HepG2 (cell line): ENCODE measurements at regions of chr5 and their contacts with region 1.

Region 1: GRCh38 chr5:8013948-8014710 is 145.2 kb downstream of the MTRR start:
- DNase-seq: no peak
- ATAC-seq: no peak
- H3K4me3 ChIP-seq: no peak overlapping the region
- H3K27ac ChIP-seq: no peak overlapping the region
- H3K4me1 ChIP-seq: no peaks in the 10 kb centered on the region
- H3K27me3 ChIP-seq: no peaks in the 10 kb centered on the region
- CTCF ChIP-seq: no peak
- EP300 ChIP-seq: no peak
- POLR2A ChIP-seq: no peak
- RAD21 ChIP-seq: no peak

Region 2: DNA sequence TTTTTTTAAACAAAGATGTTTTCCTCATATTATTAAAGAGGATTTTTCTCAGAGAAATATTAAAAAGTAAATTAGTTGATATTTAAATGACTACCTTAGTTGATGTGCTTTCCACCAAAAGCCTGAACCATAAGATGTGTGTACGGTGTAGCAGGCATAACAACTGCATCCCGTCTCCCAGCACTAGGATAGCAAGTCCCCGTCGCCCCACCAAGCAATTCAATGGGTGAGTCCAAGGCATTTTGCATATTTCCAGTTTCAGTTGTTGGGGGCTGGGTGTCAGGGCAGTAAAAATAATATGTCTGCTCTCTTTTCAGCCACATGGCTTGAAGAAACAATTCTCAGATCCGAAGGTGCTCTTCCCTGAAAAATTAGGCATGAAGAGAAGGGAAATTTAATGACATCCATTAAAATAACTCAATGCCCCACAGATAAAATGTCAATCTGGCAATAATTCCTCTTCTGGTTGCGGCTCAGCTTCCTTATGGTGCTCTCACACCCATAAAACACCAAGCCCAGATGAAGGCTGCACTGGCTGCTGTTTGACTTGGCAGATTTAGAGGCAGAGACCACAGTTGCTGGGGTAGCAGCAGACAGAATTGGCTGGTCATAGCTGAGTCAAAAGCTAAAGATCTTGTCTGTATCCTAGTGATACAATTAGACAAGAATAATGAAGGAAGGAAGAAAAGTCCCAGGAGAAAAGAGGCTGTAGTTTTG is 742.6 kb before region 1 on chr5:
- CTCF ChIA-PET with region 1: no interaction called
- POLR2A ChIA-PET with region 1: no interaction called
- in situ Hi-C with region 1: no loop called
- intact Hi-C with region 1: no loop called
- DNase-seq: no peak
- ATAC-seq: no peak
- H3K4me3 ChIP-seq: no peak overlapping the region
- H3K27ac ChIP-seq: no peak overlapping the region
- H3K4me1 ChIP-seq: no peaks in the 10 kb centered on the region
- H3K27me3 ChIP-seq: no peaks in the 10 kb centered on the region; a peak in 1 of 5 replicates
- CTCF ChIP-seq: no peak
- EP300 ChIP-seq: no peak
- POLR2A ChIP-seq: no peak
- RAD21 ChIP-seq: no peak

Region 3: GRCh38 chr5:8184455-8185063 is 170.4 kb after region 1 on chr5:
- CTCF ChIA-PET with region 1: no interaction called
- POLR2A ChIA-PET with region 1: no interaction called
- in situ Hi-C with region 1: no loop called
- intact Hi-C with region 1: loop called (anchors 1 kb)
- DNase-seq: peak; percentile 20
- ATAC-seq: peak; percentile 94
- H3K4me3 ChIP-seq: no peak overlapping the region
- H3K27ac ChIP-seq: no peak overlapping the region
- H3K4me1 ChIP-seq: no peaks in the 10 kb centered on the region
- H3K27me3 ChIP-seq: no peaks in the 10 kb centered on the region
- CTCF ChIP-seq: peak; percentile 74
- EP300 ChIP-seq: no peak
- POLR2A ChIP-seq: no peak
- RAD21 ChIP-seq: no peak